CD4-positive, alpha-beta memory T cell (primary cell): ENCODE measurements at regions of chr16 and their contacts with region 1.

Region 1: DNA sequence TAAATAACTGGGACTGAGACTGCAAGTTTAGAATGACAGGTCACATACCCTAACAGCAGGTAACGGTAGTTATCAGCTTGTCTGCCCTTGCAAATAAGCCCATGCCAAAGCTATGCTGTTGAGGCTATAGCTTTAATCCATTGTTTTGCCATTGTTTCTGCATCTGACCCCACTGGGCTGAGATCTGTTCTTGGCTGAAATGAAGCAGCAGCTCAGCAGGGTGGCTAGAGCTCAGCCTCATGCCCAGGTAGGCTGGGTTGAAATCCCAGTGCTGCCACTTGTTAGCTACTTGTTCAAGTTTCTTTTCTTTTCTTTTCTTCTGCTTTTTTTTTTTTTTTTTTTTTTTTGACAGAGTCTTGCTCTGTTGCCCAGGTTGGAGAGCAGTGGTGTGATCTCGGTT is 40.1 kb downstream of the NKD1 start:
- DNase-seq: no peak
- H3K4me3 ChIP-seq: no peak overlapping the region
- H3K4me3 Mint-ChIP-seq: peak overlapping the region in 2 of 8 donors; percentile 87 to 91
- H3K27ac ChIP-seq: no peak overlapping the region
- H3K27ac Mint-ChIP-seq: peak overlapping the region in 2 of 7 donors; percentile 47 to 70
- H3K4me1 ChIP-seq: peaks cover 17% of the 10 kb centered on the region
- H3K4me1 Mint-ChIP-seq: peaks cover 19 to 27% (median 24%) of the 10 kb centered on the region in 4 donors
- H3K27me3 ChIP-seq: no peaks in the 10 kb centered on the region
- H3K27me3 Mint-ChIP-seq: no peaks in the 10 kb centered on the region

Region 2: GRCh38 chr16:50273681-50274325 is 314.5 kb before region 1 on chr16:
- CTCF ChIA-PET with region 1: no interaction called
- POLR2A ChIA-PET with region 1: no interaction called
- intact Hi-C with region 1: no loop called
- DNase-seq: peak; percentile 24 to 69 (median 35)
- H3K4me3 ChIP-seq: peak overlapping the region; percentile 77 to 90
- H3K4me3 Mint-ChIP-seq: peak overlapping the region; percentile 90 to 98 (median 92)
- H3K27ac ChIP-seq: peak overlapping the region; percentile 71
- H3K27ac Mint-ChIP-seq: peak overlapping the region; percentile 96 to 99 (median 98)
- H3K4me1 ChIP-seq: peaks cover 98% of the 10 kb centered on the region
- H3K4me1 Mint-ChIP-seq: peaks cover 59 to 100% (median 89%) of the 10 kb centered on the region in 4 donors
- H3K27me3 ChIP-seq: no peaks in the 10 kb centered on the region
- H3K27me3 Mint-ChIP-seq: no peaks in the 10 kb centered on the region

Region 3: GRCh38 chr16:50371936-50372595 is 216.2 kb before region 1 on chr16:
- CTCF ChIA-PET with region 1: no interaction called
- POLR2A ChIA-PET with region 1: no interaction called
- intact Hi-C with region 1: no loop called
- DNase-seq: no peak
- H3K4me3 ChIP-seq: no peak overlapping the region
- H3K4me3 Mint-ChIP-seq: peak overlapping the region in 2 of 8 donors; percentile 30 to 44
- H3K27ac ChIP-seq: no peak overlapping the region
- H3K27ac Mint-ChIP-seq: no peak overlapping the region
- H3K4me1 ChIP-seq: peaks cover 18% of the 10 kb centered on the region
- H3K4me1 Mint-ChIP-seq: peaks cover 17 to 24% (median 18%) of the 10 kb centered on the region in 4 donors
- H3K27me3 ChIP-seq: no peaks in the 10 kb centered on the region
- H3K27me3 Mint-ChIP-seq: peaks cover 4 to 5% of the 10 kb centered on the region in 2 donors

Region 4: GRCh38 chr16:50603206-50604064 is 15.2 kb after region 1 on chr16:
- CTCF ChIA-PET with region 1: no interaction called
- POLR2A ChIA-PET with region 1: interaction called, 4 read pairs
- intact Hi-C with region 1: loop called (anchors 2 kb)
- DNase-seq: no peak
- H3K4me3 ChIP-seq: no peak overlapping the region
- H3K4me3 Mint-ChIP-seq: peak overlapping the region in 2 of 8 donors; percentile 75 to 80
- H3K27ac ChIP-seq: no peak overlapping the region
- H3K27ac Mint-ChIP-seq: peak overlapping the region; percentile 33 to 94 (median 83)
- H3K4me1 ChIP-seq: peaks cover 37% of the 10 kb centered on the region
- H3K4me1 Mint-ChIP-seq: peaks cover 19 to 42% (median 32%) of the 10 kb centered on the region in 4 donors
- H3K27me3 ChIP-seq: no peaks in the 10 kb centered on the region
- H3K27me3 Mint-ChIP-seq: no peaks in the 10 kb centered on the region